AG04450 (cell line): ENCODE measurements at regions of chr7 and their contacts with region 1.

Region 1: GRCh38 chr7:102236592-102237287 is 49.9 kb upstream of the SH2B2 start:
- DNase-seq: peak; percentile 24
- H3K4me3 ChIP-seq: no peak overlapping the region
- H3K27ac ChIP-seq: no peak overlapping the region
- H3K27me3 ChIP-seq: no peaks in the 10 kb centered on the region
- CTCF ChIP-seq: peak; percentile 87

Region 2: GRCh38 chr7:101688183-101688831 is 548.4 kb before region 1 on chr7:
- CTCF ChIA-PET with region 1: interaction called, 11 read pairs
- POLR2A ChIA-PET with region 1: no interaction called
- DNase-seq: peak; percentile 18
- H3K4me3 ChIP-seq: peak overlapping the region; percentile 41
- H3K27ac ChIP-seq: no peak overlapping the region
- H3K27me3 ChIP-seq: peaks cover 4% of the 10 kb centered on the region
- CTCF ChIP-seq: peak; percentile 84

Region 3: DNA sequence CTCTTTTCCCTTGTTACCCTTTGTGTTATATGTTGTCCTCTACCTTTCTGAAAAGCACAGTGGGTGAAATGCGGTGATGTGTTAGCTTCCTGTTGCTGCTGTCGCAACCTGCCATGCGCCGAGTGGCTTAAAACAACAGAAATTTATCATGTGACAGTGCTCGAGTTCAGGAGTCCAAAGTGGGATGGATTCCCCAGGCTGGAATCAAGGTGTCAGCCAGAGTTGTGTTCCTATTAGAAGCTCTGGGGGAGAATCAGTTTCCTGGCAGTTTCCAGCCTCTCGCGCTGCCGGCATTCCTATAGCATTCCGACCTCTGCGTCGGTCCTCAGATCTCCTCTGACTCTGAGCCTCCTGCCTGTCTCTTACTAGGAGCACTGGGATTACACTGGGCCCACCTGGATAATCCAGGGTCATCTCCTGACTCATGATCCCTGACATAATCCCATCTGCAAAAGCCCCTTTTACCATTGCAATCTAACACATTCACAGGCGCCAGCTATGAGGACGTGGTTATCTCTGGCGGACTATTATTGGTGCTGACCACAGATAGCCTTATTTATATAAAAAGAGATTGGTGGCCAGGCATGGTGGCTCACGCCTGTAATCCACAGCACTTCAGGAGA is 211.9 kb before region 1 on chr7:
- CTCF ChIA-PET with region 1: no interaction called
- POLR2A ChIA-PET with region 1: no interaction called
- DNase-seq: no peak
- H3K4me3 ChIP-seq: no peak overlapping the region
- H3K27ac ChIP-seq: no peak overlapping the region
- H3K27me3 ChIP-seq: no peaks in the 10 kb centered on the region
- CTCF ChIP-seq: no peak

Region 4: GRCh38 chr7:102220960-102221800 is 15.6 kb before region 1 on chr7:
- CTCF ChIA-PET with region 1: interaction called, 11 read pairs
- POLR2A ChIA-PET with region 1: no interaction called
- DNase-seq: peak; percentile 26
- H3K4me3 ChIP-seq: peak overlapping the region; percentile 37
- H3K27ac ChIP-seq: peak overlapping the region; percentile 75
- H3K27me3 ChIP-seq: no peaks in the 10 kb centered on the region
- CTCF ChIP-seq: no peak

Region 5: GRCh38 chr7:102266541-102266940 is 29.8 kb after region 1 on chr7:
- CTCF ChIA-PET with region 1: no interaction called
- POLR2A ChIA-PET with region 1: no interaction called
- DNase-seq: no peak
- H3K4me3 ChIP-seq: no peak overlapping the region
- H3K27ac ChIP-seq: no peak overlapping the region
- H3K27me3 ChIP-seq: no peaks in the 10 kb centered on the region
- CTCF ChIP-seq: no peak